Activated CD4-positive, alpha-beta T cell treated with anti-CD3 and anti-CD28 coated beads, Interleukin-2, amount 10 ng/mL, durations not matched to agents 24 days and 14 days (primary cell): ENCODE measurements at regions of chr5 and their contacts with region 1.

Region 1: GRCh38 chr5:58886315-58887207 is 303.7 kb downstream of the RAB3C start:
- DNase-seq: peak; percentile 90
- H3K4me3 Mint-ChIP-seq: peak overlapping the region; percentile 9
- H3K27ac Mint-ChIP-seq: peak overlapping the region; percentile 65
- H3K4me1 Mint-ChIP-seq: peaks cover 30% of the 10 kb centered on the region
- H3K27me3 Mint-ChIP-seq: peaks cover 13% of the 10 kb centered on the region

Region 2: DNA sequence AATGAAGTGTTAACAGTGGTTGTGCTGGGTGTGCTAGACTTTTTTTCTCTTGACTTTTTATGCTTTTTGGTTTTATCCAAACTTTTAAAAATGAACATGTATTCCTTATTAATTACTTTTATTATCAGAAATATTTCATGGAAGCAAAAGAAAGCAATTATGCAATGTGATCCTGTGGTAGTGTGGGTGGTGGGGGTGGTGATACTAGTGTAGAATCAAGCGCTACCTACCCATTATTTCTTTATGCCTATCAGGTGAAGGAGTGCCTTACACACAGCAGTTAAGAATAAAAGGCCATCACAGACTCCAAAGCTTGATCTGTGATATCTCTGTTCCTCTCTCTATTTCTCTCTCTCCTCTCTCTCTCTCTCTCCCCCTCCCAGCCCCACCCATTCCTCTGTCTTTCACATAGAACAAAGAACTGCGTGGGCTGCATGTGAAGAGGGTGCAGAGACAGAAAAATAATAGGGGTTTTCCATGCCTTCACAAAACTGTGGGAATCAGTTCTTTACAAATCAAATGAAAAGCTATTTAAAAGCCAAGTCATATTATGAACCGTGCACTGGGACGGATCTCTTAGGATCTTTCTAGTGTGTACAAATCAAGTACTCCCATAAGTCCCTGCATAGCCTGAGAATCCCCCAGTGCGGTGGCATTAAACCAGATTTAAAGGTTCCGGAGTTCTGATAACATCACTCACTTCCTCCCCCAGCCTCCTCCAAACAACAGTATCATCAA is 47.5 kb after region 1 on chr5:
- intact Hi-C with region 1: loop called (anchors 5 kb)
- DNase-seq: peak; percentile 77
- H3K4me3 Mint-ChIP-seq: peak overlapping the region; percentile 53
- H3K27ac Mint-ChIP-seq: peak overlapping the region; percentile 74
- H3K4me1 Mint-ChIP-seq: peaks cover 14% of the 10 kb centered on the region
- H3K27me3 Mint-ChIP-seq: peaks cover 6% of the 10 kb centered on the region

Region 3: DNA sequence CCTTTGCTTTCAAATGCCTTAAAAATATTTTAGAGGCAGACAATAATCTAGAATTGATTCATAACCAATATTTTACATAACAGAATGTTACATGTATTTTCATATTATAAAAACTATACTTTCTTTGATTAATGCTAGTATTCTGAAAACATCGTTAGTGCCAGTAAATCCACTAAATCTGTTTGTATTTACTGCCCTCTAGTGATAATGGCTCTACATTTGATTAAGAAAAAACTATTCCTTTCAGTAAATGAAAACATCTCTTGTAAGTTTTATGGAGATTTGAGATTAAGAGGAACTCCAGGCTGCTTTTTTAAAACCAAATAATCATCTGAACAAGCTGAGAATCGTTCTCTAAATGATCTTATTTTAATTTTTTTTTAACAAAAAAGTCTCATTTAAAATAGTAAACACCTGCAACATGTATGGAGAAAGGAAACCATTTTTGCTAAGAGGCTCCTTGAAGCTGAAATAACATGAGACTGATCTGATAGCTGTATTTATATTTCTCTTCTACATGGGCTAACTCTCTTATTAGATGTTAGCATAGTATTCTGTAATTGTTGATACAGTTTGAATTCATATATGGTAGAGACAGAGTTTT is 121.0 kb after region 1 on chr5:
- intact Hi-C with region 1: loop called (anchors 1 kb)
- DNase-seq: no peak
- H3K4me3 Mint-ChIP-seq: no peak overlapping the region
- H3K27ac Mint-ChIP-seq: no peak overlapping the region
- H3K4me1 Mint-ChIP-seq: peaks cover 55% of the 10 kb centered on the region
- H3K27me3 Mint-ChIP-seq: no peaks in the 10 kb centered on the region

Region 4: GRCh38 chr5:59069438-59070079 is 183.0 kb after region 1 on chr5:
- intact Hi-C with region 1: no loop called
- DNase-seq: no peak
- H3K4me3 Mint-ChIP-seq: no peak overlapping the region
- H3K27ac Mint-ChIP-seq: no peak overlapping the region
- H3K4me1 Mint-ChIP-seq: peaks cover 4% of the 10 kb centered on the region
- H3K27me3 Mint-ChIP-seq: peaks cover 10% of the 10 kb centered on the region

Region 5: GRCh38 chr5:59099270-59099994 is 212.9 kb after region 1 on chr5:
- intact Hi-C with region 1: loop called (anchors 1 kb)
- DNase-seq: peak; percentile 89
- H3K4me3 Mint-ChIP-seq: peak overlapping the region; percentile 57
- H3K27ac Mint-ChIP-seq: peak overlapping the region; percentile 83
- H3K4me1 Mint-ChIP-seq: peaks cover 60% of the 10 kb centered on the region
- H3K27me3 Mint-ChIP-seq: no peaks in the 10 kb centered on the region

Region 6: GRCh38 chr5:59188419-59189225 is 302.1 kb after region 1 on chr5:
- intact Hi-C with region 1: loop called (anchors 5 kb)
- DNase-seq: peak; percentile 88
- H3K4me3 Mint-ChIP-seq: peak overlapping the region; percentile 52
- H3K27ac Mint-ChIP-seq: no peak overlapping the region
- H3K4me1 Mint-ChIP-seq: peaks cover 7% of the 10 kb centered on the region
- H3K27me3 Mint-ChIP-seq: peaks cover 45% of the 10 kb centered on the region

Region 7: GRCh38 chr5:59380350-59380951 is 493.9 kb after region 1 on chr5:
- intact Hi-C with region 1: loop called (anchors 5 kb)
- DNase-seq: peak; percentile 70
- H3K4me3 Mint-ChIP-seq: no peak overlapping the region
- H3K27ac Mint-ChIP-seq: no peak overlapping the region
- H3K4me1 Mint-ChIP-seq: peaks cover 5% of the 10 kb centered on the region
- H3K27me3 Mint-ChIP-seq: peaks cover 16% of the 10 kb centered on the region